ENCODE measurements at regions of chr13 and their contacts with region 1.

Region 1: GRCh38 chr13:113562085-113562749 is 22.3 kb upstream of the TFDP1 start:
- DNase-seq: peak; percentile 52
- H3K4me3 ChIP-seq: no peak overlapping the region
- H3K27ac ChIP-seq: no peak overlapping the region
- H3K4me1 ChIP-seq: no peaks in the 10 kb centered on the region
- H3K27me3 ChIP-seq: no peaks in the 10 kb centered on the region
- CTCF ChIP-seq: peak; percentile 53 to 67 (median 57)
- EP300 ChIP-seq: no peak
- POLR2A ChIP-seq: no peak

Region 2: GRCh38 chr13:112417079-112417478 is 1145.1 kb before region 1 on chr13:
- in situ Hi-C with region 1: no loop called
- intact Hi-C with region 1: loop called (anchors 5 kb)
- DNase-seq: no peak
- H3K4me3 ChIP-seq: no peak overlapping the region
- H3K27ac ChIP-seq: no peak overlapping the region
- H3K4me1 ChIP-seq: no peaks in the 10 kb centered on the region
- H3K27me3 ChIP-seq: no peaks in the 10 kb centered on the region
- CTCF ChIP-seq: no peak
- EP300 ChIP-seq: no peak
- POLR2A ChIP-seq: no peak

Region 3: GRCh38 chr13:113049521-113049941 is 512.7 kb before region 1 on chr13:
- in situ Hi-C with region 1: no loop called
- intact Hi-C with region 1: no loop called
- DNase-seq: no peak
- H3K4me3 ChIP-seq: no peak overlapping the region
- H3K27ac ChIP-seq: no peak overlapping the region
- H3K4me1 ChIP-seq: no peaks in the 10 kb centered on the region
- H3K27me3 ChIP-seq: peaks cover 6% of the 10 kb centered on the region
- CTCF ChIP-seq: no peak
- EP300 ChIP-seq: no peak
- POLR2A ChIP-seq: no peak

Region 4: GRCh38 chr13:113458253-113459065 is 103.8 kb before region 1 on chr13:
- in situ Hi-C with region 1: no loop called
- intact Hi-C with region 1: loop called (anchors 5 kb)
- DNase-seq: no peak
- H3K4me3 ChIP-seq: no peak overlapping the region
- H3K27ac ChIP-seq: peak overlapping the region in 2 of 4 donors; percentile 36 to 38
- H3K4me1 ChIP-seq: no peaks in the 10 kb centered on the region
- H3K27me3 ChIP-seq: no peaks in the 10 kb centered on the region
- CTCF ChIP-seq: peak in 3 of 5 experiments; percentile 27 to 35 (median 27)
- EP300 ChIP-seq: no peak
- POLR2A ChIP-seq: no peak

Region 5: GRCh38 chr13:113586661-113587479 is 24.7 kb after region 1 on chr13:
- in situ Hi-C with region 1: no loop called
- intact Hi-C with region 1: no loop called
- DNase-seq: peak; percentile 6
- H3K4me3 ChIP-seq: no peak overlapping the region
- H3K27ac ChIP-seq: no peak overlapping the region
- H3K4me1 ChIP-seq: peaks cover 0 to 17% (median 13%) of the 10 kb centered on the region in 4 donors
- H3K27me3 ChIP-seq: no peaks in the 10 kb centered on the region
- CTCF ChIP-seq: no peak
- EP300 ChIP-seq: no peak
- POLR2A ChIP-seq: no peak

Measured in transverse colon (tissue), 4 donors.